Common myeloid progenitor, CD34-positive (primary cell): ENCODE measurements at regions of chr10 and their contacts with region 1.

Region 1: DNA sequence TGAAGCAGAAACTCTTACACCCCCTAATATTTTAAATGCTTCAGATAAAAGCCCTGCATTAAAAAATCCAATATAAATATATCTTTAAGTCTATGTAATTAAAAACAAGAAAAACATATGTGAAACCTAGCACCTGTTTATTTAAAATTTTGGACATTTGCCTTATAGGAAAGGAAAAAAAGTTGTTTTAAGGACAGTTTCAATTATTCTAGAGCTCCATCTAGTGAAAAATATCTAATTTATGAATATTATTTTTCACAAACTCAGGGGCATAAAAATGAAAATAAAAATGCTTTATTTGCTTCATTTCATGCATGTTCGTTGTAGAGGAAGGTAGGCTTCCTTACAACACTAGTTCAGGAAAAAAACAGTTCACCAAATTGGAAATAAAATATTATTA is 26.1 kb downstream of the ENKUR start:
- DNase-seq: peak in 1 of 3 donors; percentile 6
- H3K4me3 ChIP-seq: no peak overlapping the region
- H3K27ac ChIP-seq: no peak overlapping the region
- H3K4me1 ChIP-seq: peaks cover 0 to 8% (median 7%) of the 10 kb centered on the region in 4 experiments
- H3K27me3 ChIP-seq: no peaks in the 10 kb centered on the region

Region 2: GRCh38 chr10:24617771-24618391 is 372.0 kb before region 1 on chr10:
- CTCF ChIA-PET with region 1: interaction called, 10 read pairs
- POLR2A ChIA-PET with region 1: no interaction called
- DNase-seq: peak; percentile 70 to 73 (median 72)
- H3K4me3 ChIP-seq: no peak overlapping the region
- H3K27ac ChIP-seq: no peak overlapping the region
- H3K4me1 ChIP-seq: peaks cover 0 to 3% (median 1%) of the 10 kb centered on the region in 4 experiments
- H3K27me3 ChIP-seq: no peaks in the 10 kb centered on the region

Region 3: GRCh38 chr10:24642622-24643417 is 347.0 kb before region 1 on chr10:
- CTCF ChIA-PET with region 1: interaction called, 11 read pairs
- POLR2A ChIA-PET with region 1: no interaction called
- DNase-seq: peak; percentile 65 to 75 (median 69)
- H3K4me3 ChIP-seq: no peak overlapping the region
- H3K27ac ChIP-seq: no peak overlapping the region
- H3K4me1 ChIP-seq: peaks cover 0 to 3% (median 1%) of the 10 kb centered on the region in 4 experiments
- H3K27me3 ChIP-seq: no peaks in the 10 kb centered on the region

Region 4: GRCh38 chr10:25222085-25222660 is 232.3 kb after region 1 on chr10:
- CTCF ChIA-PET with region 1: no interaction called
- POLR2A ChIA-PET with region 1: no interaction called
- DNase-seq: no peak
- H3K4me3 ChIP-seq: no peak overlapping the region
- H3K27ac ChIP-seq: no peak overlapping the region
- H3K4me1 ChIP-seq: no peaks in the 10 kb centered on the region
- H3K27me3 ChIP-seq: peaks cover 0 to 5% (median 2%) of the 10 kb centered on the region in 5 experiments